Activated CD4-positive, alpha-beta memory T cell treated with anti-CD3 and anti-CD28 coated beads, Interleukin-2, amount 10 ng/mL, durations not matched to agents 7 days and 5 days (primary cell): ENCODE measurements at regions of chr3 and their contacts with region 1.

Region 1: GRCh38 chr3:114223143-114223542 is 14.2 kb downstream of the ZNF80 start:
- DNase-seq: no peak
- H3K4me3 Mint-ChIP-seq: no peak overlapping the region
- H3K27ac Mint-ChIP-seq: peak overlapping the region; percentile 99
- H3K4me1 Mint-ChIP-seq: peaks cover 95% of the 10 kb centered on the region
- H3K27me3 Mint-ChIP-seq: no peaks in the 10 kb centered on the region

Region 2: DNA sequence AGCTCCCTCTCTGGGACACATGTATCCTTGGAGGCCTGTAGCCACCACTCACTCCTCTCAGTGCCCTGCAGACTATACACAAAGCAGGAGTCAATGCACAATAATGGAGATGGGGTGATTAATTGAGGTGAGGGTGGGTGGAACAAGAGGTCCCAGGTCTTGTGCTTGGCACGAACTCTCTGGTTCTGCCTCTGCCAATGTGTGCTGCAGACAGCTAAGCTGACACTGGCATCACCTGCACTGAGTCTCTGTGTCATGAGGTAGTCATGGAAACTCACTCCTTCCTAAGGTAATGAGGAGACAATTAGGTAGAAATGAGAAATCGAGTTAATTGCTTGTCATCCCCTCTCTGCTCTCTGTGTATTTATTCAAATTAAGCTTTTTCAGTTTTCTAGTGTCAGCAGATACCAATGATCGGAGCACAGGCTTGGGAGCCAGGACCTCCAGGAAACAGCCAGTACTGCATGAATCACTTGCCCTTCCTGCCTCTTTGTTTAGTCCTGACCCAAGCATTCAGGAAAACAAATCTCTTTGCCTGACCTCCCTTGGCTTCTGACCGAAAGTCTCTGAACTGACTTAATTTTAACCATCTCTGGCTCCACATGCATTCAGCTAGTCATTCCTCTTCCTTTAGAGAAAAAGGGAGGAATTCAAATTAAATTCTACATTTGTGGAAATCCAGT is 101.0 kb before region 1 on chr3:
- CTCF ChIA-PET with region 1: no interaction called
- POLR2A ChIA-PET with region 1: no interaction called
- DNase-seq: no peak
- H3K4me3 Mint-ChIP-seq: no peak overlapping the region
- H3K27ac Mint-ChIP-seq: no peak overlapping the region
- H3K4me1 Mint-ChIP-seq: no peaks in the 10 kb centered on the region
- H3K27me3 Mint-ChIP-seq: no peaks in the 10 kb centered on the region

Region 3: GRCh38 chr3:114242947-114243346 is 19.8 kb after region 1 on chr3:
- CTCF ChIA-PET with region 1: interaction called, 4 read pairs
- POLR2A ChIA-PET with region 1: interaction called, 69 read pairs
- DNase-seq: peak; percentile 45
- H3K4me3 Mint-ChIP-seq: no peak overlapping the region
- H3K27ac Mint-ChIP-seq: peak overlapping the region; percentile 18
- H3K4me1 Mint-ChIP-seq: peaks cover 35% of the 10 kb centered on the region
- H3K27me3 Mint-ChIP-seq: no peaks in the 10 kb centered on the region

Region 4: GRCh38 chr3:114308830-114309229 is 85.7 kb after region 1 on chr3:
- CTCF ChIA-PET with region 1: interaction called, 5 read pairs
- POLR2A ChIA-PET with region 1: interaction called, 20 read pairs
- DNase-seq: peak; percentile 75
- H3K4me3 Mint-ChIP-seq: peak overlapping the region; percentile 51
- H3K27ac Mint-ChIP-seq: peak overlapping the region; percentile 90
- H3K4me1 Mint-ChIP-seq: peaks cover 52% of the 10 kb centered on the region
- H3K27me3 Mint-ChIP-seq: no peaks in the 10 kb centered on the region